ENCODE measurements at regions of chr19 and their contacts with region 1.

Region 1: DNA sequence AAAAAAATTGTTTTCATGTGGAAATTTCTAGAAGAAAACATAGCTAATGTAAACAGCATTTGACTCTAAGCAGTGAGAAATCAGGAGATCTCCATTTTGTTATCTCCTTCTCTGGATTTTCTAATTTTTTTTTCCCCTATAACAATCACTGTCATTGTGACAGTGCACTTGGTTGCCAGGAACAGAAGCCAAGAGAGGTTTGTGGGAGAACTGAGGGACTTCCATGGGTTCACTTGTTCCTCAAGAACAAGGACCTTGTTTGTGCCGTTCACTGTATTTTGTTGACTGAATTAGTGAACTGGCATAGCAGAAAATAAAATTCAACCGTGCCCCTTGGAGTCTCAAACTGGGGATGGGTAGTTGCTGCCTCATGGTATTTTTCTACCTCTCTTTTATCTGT is 17.1 kb downstream of the SHISA7 start:
- DNase-seq: no peak
- H3K4me3 ChIP-seq: no peak overlapping the region
- H3K27ac ChIP-seq: no peak overlapping the region
- H3K4me1 ChIP-seq: peaks cover 0 to 3% (median 0%) of the 10 kb centered on the region in 4 experiments; a peak in 1 of 7 replicates
- H3K27me3 ChIP-seq: peaks cover 0 to 2% (median 0%) of the 10 kb centered on the region in 4 experiments; a peak in 1 of 7 replicates
- CTCF ChIP-seq: no peak
- EP300 ChIP-seq: no peak
- POLR2A ChIP-seq: no peak
- RAD21 ChIP-seq: no peak

Region 2: GRCh38 chr19:55452749-55453346 is 26.8 kb after region 1 on chr19:
- CTCF ChIA-PET with region 1: interaction called, 13 read pairs
- POLR2A ChIA-PET with region 1: interaction called, 3 read pairs
- DNase-seq: peak in 1 of 2 experiments; percentile 95
- H3K4me3 ChIP-seq: peak overlapping the region in 2 of 4 experiments; percentile 26 to 69; a peak in 3 of 8 replicates
- H3K27ac ChIP-seq: no peak overlapping the region
- H3K4me1 ChIP-seq: peaks cover 0 to 5% (median 2%) of the 10 kb centered on the region in 4 experiments; a peak in 5 of 7 replicates
- H3K27me3 ChIP-seq: peaks cover 25 to 45% (median 43%) of the 10 kb centered on the region in 4 experiments
- CTCF ChIP-seq: no peak
- EP300 ChIP-seq: peak in 1 of 2 experiments; percentile 94; a peak in 2 of 3 replicates
- POLR2A ChIP-seq: no peak
- RAD21 ChIP-seq: no peak

Measured in H1 (cell line).